GM13977 (cell line): ENCODE measurements at regions of chr11 and their contacts with region 1.

Region 1: DNA sequence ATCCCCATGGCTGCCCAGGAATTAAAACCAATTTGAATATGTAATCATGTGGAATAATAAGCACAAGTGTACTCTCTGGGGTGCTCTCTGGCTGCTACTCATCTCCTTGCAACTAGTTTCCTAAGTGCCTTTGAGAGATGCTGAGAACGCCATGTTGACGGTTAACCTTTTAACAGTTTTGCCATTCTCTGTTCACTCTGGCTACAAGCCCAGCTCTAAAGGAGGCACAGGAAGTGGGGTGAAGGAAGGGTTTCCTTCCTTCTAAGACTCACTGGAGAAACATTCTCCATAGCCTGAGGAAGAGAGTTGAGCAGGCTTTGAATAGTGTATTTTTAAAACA is 122.0 kb upstream of the ZC3H12C start:
- DNase-seq: no peak
- CTCF ChIP-seq: no peak

Region 2: GRCh38 chr11:110373051-110373702 is 402.0 kb after region 1 on chr11:
- in situ Hi-C with region 1: loop called (anchors 25 kb)
- DNase-seq: peak; percentile 69
- CTCF ChIP-seq: no peak